ENCODE measurements at regions of chr10 and their contacts with region 1.

Region 1: GRCh38 chr10:67779465-67780203 is 58.4 kb downstream of the DNAJC12 start:
- DNase-seq: peak; percentile 71 to 82 (median 77)
- H3K4me3 ChIP-seq: no peak overlapping the region
- H3K4me3 Mint-ChIP-seq: no peak overlapping the region
- H3K27ac ChIP-seq: no peak overlapping the region
- H3K27ac Mint-ChIP-seq: no peak overlapping the region
- H3K4me1 ChIP-seq: peaks cover 15 to 17% of the 10 kb centered on the region in 2 donors
- H3K4me1 Mint-ChIP-seq: peaks cover 22% of the 10 kb centered on the region
- H3K27me3 ChIP-seq: no peaks in the 10 kb centered on the region
- H3K27me3 Mint-ChIP-seq: peaks cover 0 to 3% (median 0%) of the 10 kb centered on the region in 3 donors
- CTCF ChIP-seq: peak; percentile 87

Region 2: DNA sequence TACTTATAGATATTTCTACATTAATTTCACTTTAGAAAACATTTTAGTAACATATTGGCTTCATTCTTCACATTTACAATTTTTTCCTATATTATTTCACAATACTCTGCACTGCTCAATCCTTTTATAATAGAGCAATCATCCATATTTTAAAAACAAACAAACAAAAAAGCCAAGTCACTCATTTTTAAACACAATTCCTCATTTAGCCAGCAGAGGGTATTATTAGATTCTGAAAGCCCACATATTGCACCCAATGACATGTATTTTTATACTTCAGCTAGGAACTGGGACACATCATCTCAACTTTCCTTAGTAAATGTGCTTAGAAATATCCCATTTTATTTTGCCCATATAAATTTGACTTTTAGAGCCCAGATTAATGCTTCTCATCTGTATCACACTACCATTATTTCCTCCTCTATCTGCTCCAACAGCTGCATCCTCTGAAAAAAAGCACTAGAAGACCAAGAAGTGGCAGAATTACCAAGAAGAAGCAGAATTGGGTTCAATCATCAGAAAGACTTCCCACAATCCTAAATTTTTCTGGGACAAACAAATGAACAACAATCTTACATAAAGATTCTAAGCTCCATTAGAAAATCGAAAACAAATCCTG is 113.1 kb before region 1 on chr10:
- intact Hi-C with region 1: loop called in 1 of 2 experiments (anchors 10 kb)
- DNase-seq: peak in 2 of 3 donors; percentile 2 to 14
- H3K4me3 ChIP-seq: no peak overlapping the region
- H3K4me3 Mint-ChIP-seq: no peak overlapping the region
- H3K27ac ChIP-seq: no peak overlapping the region
- H3K27ac Mint-ChIP-seq: no peak overlapping the region
- H3K4me1 ChIP-seq: no peaks in the 10 kb centered on the region
- H3K4me1 Mint-ChIP-seq: no peaks in the 10 kb centered on the region
- H3K27me3 ChIP-seq: no peaks in the 10 kb centered on the region
- H3K27me3 Mint-ChIP-seq: peaks cover 0 to 3% (median under 1%) of the 10 kb centered on the region in 3 donors
- CTCF ChIP-seq: peak; percentile 67

Region 3: DNA sequence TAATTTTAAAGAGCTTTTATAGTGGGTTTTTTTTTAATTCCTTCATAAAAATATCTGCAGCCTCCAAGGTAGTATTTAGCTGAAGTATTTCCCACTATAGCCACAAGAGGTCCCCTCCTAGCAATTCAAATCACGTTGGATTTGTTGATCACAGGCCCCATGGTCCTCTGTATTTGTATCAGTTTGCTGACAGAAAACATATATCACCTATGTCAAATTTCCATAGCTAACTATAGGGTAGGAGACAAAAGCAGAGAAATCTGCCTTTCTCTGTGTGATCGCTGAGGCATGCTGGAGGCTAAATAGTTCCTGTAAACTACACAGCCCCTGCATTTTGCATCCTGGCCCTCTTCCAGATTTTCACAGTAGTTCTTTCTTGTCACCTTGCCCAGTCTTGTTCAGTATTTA is 81.9 kb before region 1 on chr10:
- intact Hi-C with region 1: loop called (anchors 2 to 5 kb)
- DNase-seq: peak; percentile 4 to 40 (median 26)
- H3K4me3 ChIP-seq: no peak overlapping the region
- H3K4me3 Mint-ChIP-seq: no peak overlapping the region
- H3K27ac ChIP-seq: no peak overlapping the region
- H3K27ac Mint-ChIP-seq: no peak overlapping the region
- H3K4me1 ChIP-seq: no peaks in the 10 kb centered on the region
- H3K4me1 Mint-ChIP-seq: no peaks in the 10 kb centered on the region
- H3K27me3 ChIP-seq: peaks cover 6% of the 10 kb centered on the region in 2 donors
- H3K27me3 Mint-ChIP-seq: peaks cover 8 to 11% (median 8%) of the 10 kb centered on the region in 3 donors
- CTCF ChIP-seq: peak; percentile 74

Region 4: GRCh38 chr10:67790534-67791408 is 11.1 kb after region 1 on chr10:
- intact Hi-C with region 1: no loop called
- DNase-seq: peak; percentile 40 to 57 (median 57)
- H3K4me3 ChIP-seq: no peak overlapping the region
- H3K4me3 Mint-ChIP-seq: no peak overlapping the region
- H3K27ac ChIP-seq: no peak overlapping the region
- H3K27ac Mint-ChIP-seq: peak overlapping the region in 3 of 7 donors; percentile 9 to 57 (median 49)
- H3K4me1 ChIP-seq: peaks cover 21 to 25% of the 10 kb centered on the region in 2 donors
- H3K4me1 Mint-ChIP-seq: peaks cover 31% of the 10 kb centered on the region
- H3K27me3 ChIP-seq: no peaks in the 10 kb centered on the region
- H3K27me3 Mint-ChIP-seq: peaks cover 0 to 4% (median 0%) of the 10 kb centered on the region in 3 donors
- CTCF ChIP-seq: no peak

Region 5: GRCh38 chr10:68156373-68157185 is 376.9 kb after region 1 on chr10:
- intact Hi-C with region 1: loop called in 1 of 2 experiments (anchors 10 kb)
- DNase-seq: peak; percentile 16 to 61 (median 48)
- H3K4me3 ChIP-seq: no peak overlapping the region
- H3K4me3 Mint-ChIP-seq: no peak overlapping the region
- H3K27ac ChIP-seq: no peak overlapping the region
- H3K27ac Mint-ChIP-seq: no peak overlapping the region
- H3K4me1 ChIP-seq: no peaks in the 10 kb centered on the region
- H3K4me1 Mint-ChIP-seq: no peaks in the 10 kb centered on the region
- H3K27me3 ChIP-seq: no peaks in the 10 kb centered on the region
- H3K27me3 Mint-ChIP-seq: peaks cover 0 to 5% (median 4%) of the 10 kb centered on the region in 3 donors
- CTCF ChIP-seq: peak; percentile 70